IMR-90 (cell line): ENCODE measurements at regions of chr3 and their contacts with region 1.

Region 1: GRCh38 chr3:132659365-132660051 is at the start of gene ACAD11:
- DNase-seq: peak; percentile 68
- ATAC-seq: peak; percentile 80
- H3K4me3 ChIP-seq: peak within 1 kb of the TSS; percentile 84
- H3K27ac ChIP-seq: peak within 1 kb of the TSS; percentile 92
- H3K4me1 ChIP-seq: peaks cover under 1% of the 10 kb centered on the region; the same call in 1 of the 2 replicates
- H3K27me3 ChIP-seq: no peaks in the 10 kb centered on the region
- CTCF ChIP-seq: peak; percentile 58
- POLR2A ChIP-seq: no peak
- RAD21 ChIP-seq: peak; percentile 39
- total RNA-seq, gene ACAD11: 18.8 and 27.8 TPM in 2 replicates

Region 2: GRCh38 chr3:132535575-132536441 is 123.7 kb before region 1 on chr3:
- CTCF ChIA-PET with region 1: interaction called, 5 read pairs
- POLR2A ChIA-PET with region 1: no interaction called
- dilution Hi-C with region 1: no loop called
- in situ Hi-C with region 1: no loop called
- intact Hi-C with region 1: loop called (anchors 5 kb)
- DNase-seq: peak; percentile 90
- ATAC-seq: peak; percentile 92
- H3K4me3 ChIP-seq: no peak overlapping the region
- H3K27ac ChIP-seq: peak overlapping the region; percentile 66
- H3K4me1 ChIP-seq: peaks cover 21% of the 10 kb centered on the region
- H3K27me3 ChIP-seq: no peaks in the 10 kb centered on the region
- CTCF ChIP-seq: peak; percentile 75
- POLR2A ChIP-seq: no peak
- RAD21 ChIP-seq: peak; percentile 76